ENCODE measurements at regions of chr3 and their contacts with region 1.

Region 1: DNA sequence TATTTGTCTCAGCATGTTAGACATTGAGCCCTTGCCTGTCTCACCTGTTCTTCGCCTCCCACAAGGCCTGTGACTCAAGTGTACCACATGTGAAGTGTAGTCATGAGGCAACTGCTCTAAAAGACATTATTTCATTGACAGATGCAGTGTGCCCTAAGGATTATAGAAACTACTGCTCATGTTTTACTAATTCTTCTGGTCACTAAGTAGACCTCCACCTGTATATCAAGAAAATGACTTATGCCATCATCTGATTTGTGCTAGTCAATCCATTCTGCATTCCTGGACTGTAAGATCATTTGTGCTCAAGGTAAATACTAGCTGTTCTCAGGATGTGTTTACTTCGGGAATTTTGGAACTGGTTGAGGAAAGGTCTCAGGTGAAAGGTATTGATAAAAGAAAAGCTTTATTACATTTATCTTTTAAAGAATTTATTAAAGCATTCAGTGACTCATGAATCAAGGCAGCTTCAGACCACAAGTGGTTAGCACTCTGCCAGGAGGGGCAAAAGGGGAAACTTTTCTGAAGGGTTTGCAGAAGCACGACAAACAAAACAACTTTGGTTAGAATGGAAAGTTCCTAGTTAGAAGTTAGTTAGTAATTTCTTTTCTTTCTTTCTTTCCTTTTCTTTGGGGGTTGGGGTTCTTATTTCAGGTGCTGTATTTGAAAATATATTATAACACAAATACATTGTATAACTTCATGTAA is 465.3 kb upstream of the CBLB start:
- DNase-seq: peak; percentile 86
- ATAC-seq: peak; percentile 76
- H3K4me3 Mint-ChIP-seq: peak overlapping the region; percentile 73
- H3K27ac Mint-ChIP-seq: peak overlapping the region; percentile 98
- H3K4me1 Mint-ChIP-seq: peaks cover 81% of the 10 kb centered on the region
- H3K27me3 Mint-ChIP-seq: no peaks in the 10 kb centered on the region
- CTCF ChIP-seq: no peak

Region 2: GRCh38 chr3:105686278-105686897 is 647.7 kb before region 1 on chr3:
- CTCF ChIA-PET with region 1: no interaction called
- POLR2A ChIA-PET with region 1: no interaction called
- intact Hi-C with region 1: loop called (anchors 10 kb)
- DNase-seq: no peak
- ATAC-seq: peak; percentile 66
- H3K4me3 Mint-ChIP-seq: no peak overlapping the region
- H3K27ac Mint-ChIP-seq: peak overlapping the region; percentile 67
- H3K4me1 Mint-ChIP-seq: peaks cover 26% of the 10 kb centered on the region
- H3K27me3 Mint-ChIP-seq: no peaks in the 10 kb centered on the region
- CTCF ChIP-seq: peak; percentile 89

Region 3: DNA sequence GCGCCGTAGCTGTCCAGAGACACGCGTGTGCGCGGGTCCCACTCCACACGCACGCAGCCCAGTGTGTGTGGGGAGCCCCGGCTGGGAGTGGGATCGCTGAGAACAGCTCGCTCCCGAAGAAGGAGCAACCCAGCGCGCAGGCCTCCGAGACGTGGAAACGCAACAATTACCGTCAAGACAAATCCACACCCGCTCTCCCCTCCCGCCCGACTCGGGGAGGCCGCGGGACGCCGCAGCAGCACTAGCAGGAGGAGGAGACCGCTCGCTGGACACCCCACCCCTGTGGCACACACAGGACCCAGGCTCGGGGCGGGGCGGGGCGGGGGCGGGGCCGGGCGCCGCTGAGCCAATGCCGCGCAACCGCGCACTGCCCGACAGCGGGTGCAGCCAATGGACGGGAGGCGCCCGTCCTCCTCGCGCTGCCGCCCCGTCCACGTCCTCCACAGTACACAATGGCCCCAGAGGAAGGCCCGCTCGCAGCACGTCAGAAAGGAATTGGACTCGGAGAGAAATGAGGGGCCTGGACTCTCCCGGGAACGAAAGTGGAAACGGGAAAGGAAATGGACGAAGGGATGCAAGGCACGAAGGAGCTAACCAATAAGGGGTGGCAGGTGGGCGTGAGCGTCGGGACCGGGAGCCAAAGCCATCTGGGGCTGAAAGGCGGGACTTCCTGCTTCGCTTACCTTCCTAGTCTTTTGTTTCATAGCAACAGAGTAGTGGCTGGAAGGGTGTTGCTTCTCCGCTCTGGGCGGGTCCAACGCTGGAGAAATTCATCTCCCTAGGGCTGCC is 465.1 kb before region 1 on chr3 and contains the start of gene CBLB:
- CTCF ChIA-PET with region 1: no interaction called
- POLR2A ChIA-PET with region 1: interaction called, 3 read pairs
- intact Hi-C with region 1: loop called (anchors 5 kb)
- DNase-seq: peak; percentile 91
- ATAC-seq: peak; percentile 87
- H3K4me3 Mint-ChIP-seq: no peak within 1 kb of the TSS
- H3K27ac Mint-ChIP-seq: peak within 1 kb of the TSS; percentile 96
- H3K4me1 Mint-ChIP-seq: peaks cover 26% of the 10 kb centered on the region
- H3K27me3 Mint-ChIP-seq: no peaks in the 10 kb centered on the region
- CTCF ChIP-seq: no peak
- total RNA-seq, gene CBLB: 104 to 113 TPM

Region 4: DNA sequence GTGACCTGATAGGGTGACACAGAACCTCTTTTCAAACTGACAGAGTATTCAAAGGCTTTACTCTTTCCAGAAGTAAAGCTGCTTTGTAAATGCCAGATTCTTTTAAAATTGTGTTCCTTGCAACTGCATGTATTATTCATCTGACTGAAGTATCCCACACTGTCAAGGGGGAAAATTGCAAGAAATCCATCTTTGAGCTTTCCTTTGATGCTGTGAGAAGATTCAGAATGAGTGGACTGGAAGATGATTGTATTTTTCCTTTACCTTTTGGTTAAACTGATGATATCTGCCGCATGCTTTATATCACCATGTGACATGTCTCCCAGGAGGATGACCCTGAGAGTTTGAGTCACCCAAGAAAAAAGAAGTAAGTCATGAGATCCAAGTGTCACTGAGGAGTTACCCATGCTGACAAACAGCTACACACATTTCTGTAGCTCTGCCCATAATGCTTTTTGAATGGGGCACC is 214.4 kb before region 1 on chr3:
- CTCF ChIA-PET with region 1: no interaction called
- POLR2A ChIA-PET with region 1: no interaction called
- intact Hi-C with region 1: loop called (anchors 10 kb)
- DNase-seq: peak; percentile 45
- ATAC-seq: peak; percentile 96
- H3K4me3 Mint-ChIP-seq: no peak overlapping the region
- H3K27ac Mint-ChIP-seq: peak overlapping the region; percentile 60
- H3K4me1 Mint-ChIP-seq: peaks cover 25% of the 10 kb centered on the region
- H3K27me3 Mint-ChIP-seq: no peaks in the 10 kb centered on the region
- CTCF ChIP-seq: no peak

Region 5: DNA sequence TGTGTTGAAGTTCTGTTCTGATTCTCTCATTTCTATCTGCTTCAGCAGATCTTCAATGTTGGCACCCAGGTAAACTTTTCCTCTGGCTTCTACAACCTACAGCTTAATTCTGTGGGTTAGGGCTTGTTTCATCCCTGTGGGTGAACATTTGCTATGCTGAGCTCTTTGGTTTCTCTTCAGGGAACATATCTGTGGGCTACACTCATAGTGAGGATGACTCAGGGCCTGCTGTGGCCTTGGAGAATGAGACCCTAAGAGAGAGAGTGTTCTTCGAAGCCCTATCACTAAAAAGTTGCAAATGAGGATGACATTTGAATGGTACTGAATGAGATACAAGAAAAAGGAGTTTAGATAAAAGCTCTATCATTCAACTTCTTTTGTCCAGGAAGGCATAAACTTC is 119.0 kb before region 1 on chr3:
- CTCF ChIA-PET with region 1: interaction called, 3 read pairs
- POLR2A ChIA-PET with region 1: no interaction called
- intact Hi-C with region 1: loop called (anchors 5 kb)
- DNase-seq: peak; percentile 78
- ATAC-seq: peak; percentile 95
- H3K4me3 Mint-ChIP-seq: peak overlapping the region; percentile 6
- H3K27ac Mint-ChIP-seq: peak overlapping the region; percentile 85
- H3K4me1 Mint-ChIP-seq: peaks cover 57% of the 10 kb centered on the region
- H3K27me3 Mint-ChIP-seq: no peaks in the 10 kb centered on the region
- CTCF ChIP-seq: no peak

Region 6: GRCh38 chr3:106423321-106424225 is 89.5 kb after region 1 on chr3:
- CTCF ChIA-PET with region 1: interaction called, 3 read pairs
- POLR2A ChIA-PET with region 1: interaction called, 4 read pairs
- intact Hi-C with region 1: loop called (anchors 2 kb)
- DNase-seq: peak; percentile 45
- ATAC-seq: peak; percentile 63
- H3K4me3 Mint-ChIP-seq: peak overlapping the region; percentile 41
- H3K27ac Mint-ChIP-seq: peak overlapping the region; percentile 82
- H3K4me1 Mint-ChIP-seq: peaks cover 46% of the 10 kb centered on the region
- H3K27me3 Mint-ChIP-seq: no peaks in the 10 kb centered on the region
- CTCF ChIP-seq: no peak